CD4-positive, alpha-beta memory T cell (primary cell): ENCODE measurements at regions of chr22 and their contacts with region 1.

Region 1: DNA sequence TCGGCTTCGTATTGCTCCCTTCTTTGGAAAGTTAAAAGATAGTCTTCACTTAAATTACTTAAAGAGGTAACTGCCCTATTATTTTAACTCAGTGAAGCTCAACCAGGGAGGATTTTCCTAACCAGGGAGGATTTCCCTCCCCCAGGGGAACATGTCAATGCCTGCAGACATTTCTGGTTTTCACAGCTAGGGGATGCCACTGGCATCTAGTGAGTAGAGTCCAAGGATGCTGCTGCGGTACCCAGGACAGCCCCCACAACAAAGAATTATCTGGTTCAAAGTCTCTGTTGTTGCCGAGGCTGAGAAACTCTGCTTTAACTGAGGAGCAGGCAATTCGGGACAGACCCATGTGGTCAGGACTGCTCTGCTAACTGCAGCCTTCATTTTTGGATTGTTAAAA is 82.2 kb downstream of the DEPDC5 start:
- DNase-seq: no peak
- H3K4me3 ChIP-seq: no peak overlapping the region
- H3K4me3 Mint-ChIP-seq: no peak overlapping the region
- H3K27ac ChIP-seq: no peak overlapping the region
- H3K27ac Mint-ChIP-seq: no peak overlapping the region
- H3K4me1 ChIP-seq: no peaks in the 10 kb centered on the region
- H3K4me1 Mint-ChIP-seq: peaks cover 0 to 4% (median 0%) of the 10 kb centered on the region in 4 donors
- H3K27me3 ChIP-seq: no peaks in the 10 kb centered on the region
- H3K27me3 Mint-ChIP-seq: no peaks in the 10 kb centered on the region

Region 2: GRCh38 chr22:31943976-31944699 is 108.1 kb after region 1 on chr22 and contains the start of gene YWHAH:
- CTCF ChIA-PET with region 1: no interaction called
- POLR2A ChIA-PET with region 1: no interaction called
- intact Hi-C with region 1: loop called (anchors 5 kb)
- DNase-seq: peak; percentile 86 to 89 (median 86)
- H3K4me3 ChIP-seq: peak within 1 kb of the TSS; percentile 55 to 67
- H3K4me3 Mint-ChIP-seq: peak within 1 kb of the TSS; percentile 91 to 97 (median 94)
- H3K27ac ChIP-seq: peak within 1 kb of the TSS; percentile 77
- H3K27ac Mint-ChIP-seq: peak within 1 kb of the TSS in 6 of 7 donors; percentile 94 to 98 (median 96)
- H3K4me1 ChIP-seq: peaks cover 33% of the 10 kb centered on the region
- H3K4me1 Mint-ChIP-seq: peaks cover 10 to 25% (median 17%) of the 10 kb centered on the region in 4 donors
- H3K27me3 ChIP-seq: no peaks in the 10 kb centered on the region
- H3K27me3 Mint-ChIP-seq: no peaks in the 10 kb centered on the region
- total RNA-seq, gene YWHAH: 48.0 to 57.0 TPM